Posterior cingulate gyrus (tissue), 11 donors: ENCODE measurements at regions of chr11 and their contacts with region 1.

Region 1: GRCh38 chr11:118939953-118940598 is 14.3 kb upstream of the BCL9L start:
- DNase-seq: peak in 3 of 10 donors; percentile 59 to 87 (median 71)

Region 2: GRCh38 chr11:118838905-118839553 is 101.0 kb before region 1 on chr11:
- intact Hi-C with region 1: no loop called
- DNase-seq: no peak

Region 3: GRCh38 chr11:118901494-118902335 is 38.4 kb before region 1 on chr11:
- intact Hi-C with region 1: loop called (anchors 5 kb)
- DNase-seq: peak in 2 of 10 donors; percentile 71 to 74

Region 4: DNA sequence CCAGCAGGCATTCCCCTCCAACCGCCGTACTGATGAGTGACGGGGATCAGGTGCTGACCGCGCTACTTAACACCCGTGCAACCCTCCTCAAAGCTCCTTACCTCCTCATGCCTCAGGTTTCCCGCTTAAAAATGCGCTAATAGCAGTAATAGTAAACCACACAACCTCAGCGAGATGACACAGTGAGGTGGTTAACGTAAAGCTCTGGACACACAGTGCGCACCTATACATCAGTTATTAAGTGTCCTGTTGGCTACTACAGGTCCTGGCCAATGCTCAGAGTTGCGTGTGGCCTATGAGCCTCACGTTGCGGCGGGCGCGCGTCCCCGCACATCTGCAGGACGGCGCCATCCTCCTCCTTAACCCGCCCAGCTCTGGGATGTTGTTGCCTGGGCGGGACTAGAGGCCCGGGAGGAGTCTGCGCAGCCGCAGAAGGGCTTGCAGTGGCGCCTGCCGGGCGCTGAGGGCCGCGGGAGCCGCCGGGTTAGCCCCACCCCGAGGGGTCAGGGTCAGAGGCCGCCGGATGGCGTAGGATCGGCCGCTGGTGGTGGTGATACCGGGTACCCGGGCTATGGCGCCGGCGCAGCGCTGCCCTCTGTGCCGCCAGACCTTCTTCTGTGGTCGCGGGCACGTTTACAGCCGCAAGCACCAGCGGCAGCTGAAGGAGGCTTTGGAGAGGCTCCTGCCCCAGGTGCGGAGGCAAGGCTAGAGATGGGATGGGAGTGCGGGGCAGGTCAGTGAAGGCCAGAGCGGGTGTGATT is 57.7 kb after region 1 on chr11 and contains the start of gene CENATAC:
- intact Hi-C with region 1: no loop called
- DNase-seq: peak; percentile 97 to 100 (median 98)